GM10248 (cell line): ENCODE measurements at regions of chr7 and their contacts with region 1.

Region 1: DNA sequence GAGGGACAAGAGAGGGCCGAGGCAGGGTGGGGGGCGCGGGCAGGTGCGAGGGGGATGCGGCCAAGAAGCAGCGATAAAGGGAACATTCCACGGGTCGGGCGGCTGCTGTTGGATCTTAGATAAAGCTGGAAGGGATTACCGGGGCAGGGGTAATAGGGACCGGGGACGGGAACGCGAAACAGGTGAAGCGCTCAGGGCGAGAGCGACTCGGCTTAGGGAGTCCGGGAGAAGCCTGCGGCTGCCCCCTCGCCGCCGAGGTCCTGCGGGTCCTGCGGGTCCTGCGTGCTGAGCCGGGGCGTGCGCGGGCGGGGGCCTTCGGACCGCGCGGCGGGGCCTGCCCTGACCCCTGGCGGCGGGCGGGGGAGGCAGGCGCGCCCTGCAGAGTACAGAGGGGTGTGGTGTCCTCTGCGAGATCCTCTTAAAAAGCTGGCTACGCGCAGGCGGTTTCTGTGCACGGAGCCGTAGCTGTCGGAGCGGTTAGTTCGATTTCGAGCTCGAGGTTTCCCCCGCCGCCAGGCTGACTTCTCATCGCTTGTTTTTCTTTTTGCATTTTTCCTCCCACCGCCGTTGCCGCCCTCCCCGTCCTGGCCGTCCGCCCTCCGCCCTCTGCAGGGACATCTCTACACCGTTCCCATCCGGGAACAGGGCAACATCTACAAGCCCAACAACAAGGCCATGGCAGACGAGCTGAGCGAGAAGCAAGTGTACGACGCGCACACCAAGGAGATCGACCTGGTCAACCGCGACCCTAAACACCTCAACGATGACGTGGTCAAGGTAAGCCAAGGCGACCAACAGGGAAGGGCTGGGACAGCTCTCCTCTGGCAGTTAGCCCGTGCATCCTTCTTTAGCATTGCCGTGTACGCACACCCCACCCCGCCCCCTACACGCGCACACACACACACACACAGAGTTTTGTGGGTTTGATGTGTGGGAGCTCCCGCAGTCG is 1.4 kb downstream of the CAV1 start:
- DNase-seq: peak; percentile 91
- CTCF ChIP-seq: peak; percentile 90

Region 2: GRCh38 chr7:116511552-116512519 is 14.4 kb before region 1 on chr7:
- CTCF ChIA-PET with region 1: interaction called, 27 read pairs
- POLR2A ChIA-PET with region 1: no interaction called
- DNase-seq: peak; percentile 53
- CTCF ChIP-seq: no peak

Region 3: DNA sequence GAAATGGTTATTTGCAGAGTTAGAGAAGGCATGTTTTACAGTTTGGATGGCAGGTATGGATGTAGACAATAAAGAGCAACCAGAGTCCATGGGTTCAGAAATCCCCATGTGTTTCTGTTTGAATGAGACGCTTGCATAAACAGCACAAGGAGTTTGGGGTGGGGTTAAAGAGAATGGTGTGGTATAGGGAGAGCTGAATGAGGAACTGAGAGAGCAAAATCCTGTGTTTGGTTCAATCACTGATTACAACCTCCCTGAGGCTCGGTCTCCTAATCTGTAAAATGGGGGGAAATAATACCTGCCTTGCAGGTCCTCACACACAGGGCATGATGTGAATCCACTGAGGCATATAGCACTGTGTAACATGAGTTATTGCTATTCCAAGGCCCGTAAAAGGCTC is 22.3 kb after region 1 on chr7:
- CTCF ChIA-PET with region 1: interaction called, 21 read pairs
- POLR2A ChIA-PET with region 1: no interaction called
- DNase-seq: peak; percentile 28
- CTCF ChIP-seq: no peak

Region 4: DNA sequence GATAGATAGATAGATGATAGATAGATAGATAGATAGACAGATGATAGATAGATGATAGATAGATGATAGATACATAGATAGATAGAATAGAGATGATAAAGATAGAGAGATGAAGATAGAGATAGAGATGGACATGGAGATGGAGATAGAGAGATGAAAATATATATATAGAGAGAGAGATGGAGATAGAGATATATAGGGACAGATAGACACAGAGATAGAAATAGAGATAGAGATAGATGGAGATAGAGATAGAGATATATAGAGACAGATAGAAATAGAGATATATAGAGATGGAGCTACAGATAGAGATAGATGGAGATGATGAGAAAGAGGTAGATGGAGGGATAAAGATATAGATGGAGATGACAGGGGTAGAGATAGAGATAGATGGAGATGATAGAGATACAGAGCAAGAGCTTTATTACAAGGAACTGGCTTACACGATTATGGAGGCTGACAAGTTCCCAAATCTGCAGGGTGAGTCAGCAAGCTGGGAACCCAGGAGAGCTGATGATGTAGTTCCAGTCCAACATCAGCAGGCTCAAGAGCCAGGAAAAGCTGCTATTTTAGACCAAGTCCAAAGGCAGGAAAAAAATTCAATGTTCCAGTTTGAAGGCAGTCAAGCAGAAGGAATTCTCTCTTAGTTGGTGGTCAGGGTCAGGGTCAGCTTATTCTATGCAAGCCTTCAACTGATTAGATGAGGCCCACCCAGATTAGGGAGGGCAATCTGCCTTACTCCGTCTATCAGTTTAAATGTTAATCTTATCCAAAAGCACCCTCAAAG is 35.7 kb after region 1 on chr7:
- CTCF ChIA-PET with region 1: interaction called, 12 read pairs
- POLR2A ChIA-PET with region 1: no interaction called
- DNase-seq: no peak
- CTCF ChIP-seq: no peak